Caco-2 (cell line): ENCODE measurements at regions of chrX and their contacts with region 1.

Region 1: DNA sequence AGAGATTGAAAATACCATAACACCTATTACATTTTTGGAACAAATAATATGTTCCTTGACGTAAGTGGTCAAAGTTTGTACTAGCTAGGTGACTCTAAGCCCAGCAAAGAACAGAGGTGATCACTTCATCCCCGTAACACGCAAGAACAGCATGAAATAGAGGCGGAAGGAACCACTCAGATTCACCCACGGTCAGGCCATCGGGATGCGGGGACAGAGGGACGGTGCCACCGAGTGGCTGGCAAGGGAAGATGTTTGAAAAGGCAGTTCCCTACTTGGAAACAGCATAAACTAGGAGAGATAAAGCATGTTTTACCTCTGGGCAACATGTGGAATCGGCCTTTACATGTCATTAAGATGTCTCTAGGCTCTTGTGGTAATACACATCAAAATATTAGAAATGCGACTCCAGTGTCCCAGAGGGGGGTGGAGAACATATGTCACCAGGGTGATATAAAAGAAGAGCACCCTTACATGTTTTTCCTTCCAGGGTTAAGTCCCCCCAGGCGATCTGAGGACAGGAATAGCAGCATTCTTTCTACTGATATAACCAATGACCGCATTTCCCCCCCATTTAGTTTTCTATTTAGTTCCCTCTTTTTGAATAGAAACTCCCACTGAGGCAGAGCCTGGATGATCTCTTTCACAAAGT is 84.0 kb downstream of the PHKA2 start:
- DNase-seq: peak in 1 of 2 experiments; percentile 57
- H3K4me3 ChIP-seq: no peak overlapping the region
- H3K4me3 Mint-ChIP-seq: no peak overlapping the region
- H3K27ac Mint-ChIP-seq: peak overlapping the region; percentile 84
- H3K4me1 ChIP-seq: peaks cover 10% of the 10 kb centered on the region
- H3K4me1 Mint-ChIP-seq: peaks cover 8% of the 10 kb centered on the region
- H3K27me3 ChIP-seq: no peaks in the 10 kb centered on the region
- H3K27me3 Mint-ChIP-seq: no peaks in the 10 kb centered on the region
- CTCF ChIP-seq: peak in 1 of 2 experiments; percentile 44

Region 2: DNA sequence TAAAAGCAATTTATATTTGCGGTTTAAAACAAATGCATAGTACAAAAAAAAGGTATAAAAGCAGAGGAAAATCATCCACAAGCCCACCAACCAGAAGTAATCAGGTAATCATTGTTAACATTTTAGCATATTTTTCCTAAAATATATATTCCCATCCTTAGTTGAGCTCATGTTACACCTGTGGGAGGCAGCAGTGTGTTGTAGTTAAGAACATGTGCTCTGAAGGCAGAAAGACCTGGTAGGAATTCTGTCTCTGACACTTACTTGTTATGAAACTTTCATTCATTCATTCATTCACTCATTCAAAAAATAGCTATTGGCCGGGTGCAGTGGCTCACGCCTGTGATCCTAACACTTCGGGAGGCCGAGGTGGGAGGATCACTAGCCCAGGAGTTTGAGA is 489.9 kb before region 1 on chrX:
- CTCF ChIA-PET with region 1: interaction called, 5 read pairs
- POLR2A ChIA-PET with region 1: no interaction called
- intact Hi-C with region 1: loop called (anchors 1 kb)
- DNase-seq: peak in 1 of 2 experiments; percentile 34
- H3K4me3 ChIP-seq: no peak overlapping the region
- H3K4me3 Mint-ChIP-seq: no peak overlapping the region
- H3K27ac Mint-ChIP-seq: no peak overlapping the region
- H3K4me1 ChIP-seq: no peaks in the 10 kb centered on the region
- H3K4me1 Mint-ChIP-seq: no peaks in the 10 kb centered on the region
- H3K27me3 ChIP-seq: no peaks in the 10 kb centered on the region
- H3K27me3 Mint-ChIP-seq: no peaks in the 10 kb centered on the region
- CTCF ChIP-seq: peak; percentile 21 to 39

Region 3: DNA sequence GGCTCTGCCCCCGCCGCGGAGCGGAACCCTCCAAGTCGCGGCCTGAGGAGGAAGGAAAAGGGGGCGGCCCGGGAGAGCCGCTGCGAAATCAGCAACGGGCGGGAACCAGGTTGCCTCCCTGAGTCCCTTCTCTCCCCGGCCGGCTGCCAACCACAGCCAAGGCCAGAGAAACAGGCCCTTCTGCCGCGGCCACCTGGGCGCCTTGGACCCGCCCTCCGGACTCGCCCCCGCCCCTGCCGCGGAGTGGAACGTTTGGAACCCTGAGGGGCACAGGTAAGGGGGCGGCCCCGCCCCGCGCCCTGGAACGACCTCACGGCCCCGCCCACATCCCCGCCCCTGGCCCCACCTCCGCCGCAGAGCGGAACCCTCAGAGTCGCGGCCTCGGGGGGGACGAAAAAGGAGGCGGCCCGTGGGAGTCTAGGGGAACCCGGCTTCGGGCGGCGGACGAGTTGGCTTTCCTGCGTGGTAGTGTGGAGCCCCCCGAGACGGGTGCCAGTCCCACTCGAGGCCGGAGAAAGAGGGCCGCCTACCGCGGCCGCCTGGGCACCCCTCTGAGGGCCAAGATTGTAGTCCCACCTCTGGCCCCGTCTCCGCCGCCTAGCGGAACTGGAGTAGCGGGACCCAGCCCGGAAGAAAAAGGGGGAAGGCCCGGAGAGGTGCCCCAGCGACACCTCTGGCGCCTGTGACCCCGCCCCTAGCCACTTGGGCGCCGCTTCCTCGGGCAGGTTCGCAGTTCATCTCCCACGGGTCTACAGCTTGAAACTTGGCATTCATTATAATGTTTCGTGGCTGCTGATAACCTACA is 84.7 kb after region 1 on chrX:
- CTCF ChIA-PET with region 1: no interaction called
- POLR2A ChIA-PET with region 1: no interaction called
- intact Hi-C with region 1: no loop called
- DNase-seq: peak; percentile 86 to 87
- H3K4me3 ChIP-seq: peak overlapping the region; percentile 70
- H3K4me3 Mint-ChIP-seq: peak overlapping the region; percentile 85
- H3K27ac Mint-ChIP-seq: peak overlapping the region; percentile 87
- H3K4me1 ChIP-seq: no peaks in the 10 kb centered on the region
- H3K4me1 Mint-ChIP-seq: no peaks in the 10 kb centered on the region
- H3K27me3 ChIP-seq: no peaks in the 10 kb centered on the region
- H3K27me3 Mint-ChIP-seq: no peaks in the 10 kb centered on the region
- CTCF ChIP-seq: peak; percentile 36 to 45